ENCODE measurements at regions of chr7 and their contacts with region 1.

Region 1: GRCh38 chr7:123674399-123675180 is 18.9 kb downstream of the LMOD2 start:
- DNase-seq: no peak
- H3K4me3 ChIP-seq: no peak overlapping the region
- H3K4me3 Mint-ChIP-seq: no peak overlapping the region
- H3K27ac Mint-ChIP-seq: no peak overlapping the region
- H3K4me1 ChIP-seq: no peaks in the 10 kb centered on the region
- H3K4me1 Mint-ChIP-seq: peaks cover under 1% of the 10 kb centered on the region
- H3K27me3 ChIP-seq: no peaks in the 10 kb centered on the region
- H3K27me3 Mint-ChIP-seq: no peaks in the 10 kb centered on the region
- CTCF ChIP-seq: no peak

Region 2: DNA sequence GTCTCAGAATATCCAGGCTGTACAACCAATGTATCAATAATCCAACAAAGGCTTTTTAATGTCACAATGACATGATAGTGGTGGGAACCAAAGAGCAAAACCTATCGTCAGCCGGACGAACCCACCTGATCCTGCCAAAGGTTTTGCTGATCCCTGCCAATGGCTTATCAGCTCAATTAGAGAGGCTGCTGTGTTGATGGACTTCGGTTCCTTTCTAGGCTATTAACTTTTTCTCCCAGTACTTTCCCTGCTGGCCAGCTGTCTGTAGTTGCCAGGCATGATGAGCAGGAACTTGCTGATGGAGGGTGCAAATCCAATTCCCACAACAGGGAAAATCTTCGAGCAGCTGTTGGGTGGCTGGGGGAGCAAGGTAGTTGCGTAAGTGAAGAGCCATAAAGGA is 16.6 kb before region 1 on chr7:
- CTCF ChIA-PET with region 1: no interaction called
- POLR2A ChIA-PET with region 1: no interaction called
- intact Hi-C with region 1: loop called (anchors 2 kb)
- DNase-seq: no peak
- H3K4me3 ChIP-seq: no peak overlapping the region
- H3K4me3 Mint-ChIP-seq: no peak overlapping the region
- H3K27ac Mint-ChIP-seq: no peak overlapping the region
- H3K4me1 ChIP-seq: 0 out of 2 replicates have a peak, but pooled peaks cover 6% of the 10 kb centered on the region
- H3K4me1 Mint-ChIP-seq: peaks cover 10% of the 10 kb centered on the region
- H3K27me3 ChIP-seq: no peaks in the 10 kb centered on the region
- H3K27me3 Mint-ChIP-seq: no peaks in the 10 kb centered on the region
- CTCF ChIP-seq: no peak

Measured in Caco-2 (cell line).